ENCODE measurements at regions of chr6 and their contacts with region 1.

Region 1: DNA sequence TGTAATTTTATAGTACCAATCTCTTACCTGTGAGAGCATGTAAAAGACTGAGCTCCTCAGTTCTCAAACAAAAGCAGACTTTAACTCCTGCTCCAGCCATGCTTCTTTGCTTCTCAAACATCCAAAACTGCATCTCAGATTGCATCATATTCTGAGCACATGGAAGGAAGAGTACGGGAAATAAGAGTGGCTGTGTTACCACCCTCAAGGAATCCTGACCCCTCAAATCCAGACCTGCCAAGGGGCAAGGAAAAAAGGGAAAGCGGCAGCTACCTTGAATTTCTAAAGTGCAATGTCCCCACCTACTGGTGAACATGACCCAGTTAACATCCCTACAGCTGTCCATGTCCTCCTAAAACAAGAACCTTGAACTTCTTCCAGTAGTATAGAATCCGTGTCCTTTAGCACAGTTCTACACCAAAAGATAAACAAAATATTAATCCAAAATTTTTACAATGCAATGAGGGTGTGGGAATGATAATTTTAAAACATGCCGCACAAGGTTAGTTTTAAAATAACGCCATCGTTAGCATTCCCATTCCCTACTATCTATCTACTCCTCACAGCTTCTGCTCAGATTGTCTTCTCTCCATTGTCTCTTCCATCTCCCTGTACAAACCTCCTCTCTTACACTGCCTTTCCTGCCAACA is 34.1 kb upstream of the HLA-DQB1 start:
- DNase-seq: peak in 2 of 10 donors; percentile 4 to 21
- H3K4me3 ChIP-seq: no peak overlapping the region
- H3K27ac ChIP-seq: no peak overlapping the region
- H3K27me3 ChIP-seq: peaks cover 0 to 62% (median 6%) of the 10 kb centered on the region in 45 donors
- CTCF ChIP-seq: peak; percentile 33 to 88 (median 72)

Region 2: DNA sequence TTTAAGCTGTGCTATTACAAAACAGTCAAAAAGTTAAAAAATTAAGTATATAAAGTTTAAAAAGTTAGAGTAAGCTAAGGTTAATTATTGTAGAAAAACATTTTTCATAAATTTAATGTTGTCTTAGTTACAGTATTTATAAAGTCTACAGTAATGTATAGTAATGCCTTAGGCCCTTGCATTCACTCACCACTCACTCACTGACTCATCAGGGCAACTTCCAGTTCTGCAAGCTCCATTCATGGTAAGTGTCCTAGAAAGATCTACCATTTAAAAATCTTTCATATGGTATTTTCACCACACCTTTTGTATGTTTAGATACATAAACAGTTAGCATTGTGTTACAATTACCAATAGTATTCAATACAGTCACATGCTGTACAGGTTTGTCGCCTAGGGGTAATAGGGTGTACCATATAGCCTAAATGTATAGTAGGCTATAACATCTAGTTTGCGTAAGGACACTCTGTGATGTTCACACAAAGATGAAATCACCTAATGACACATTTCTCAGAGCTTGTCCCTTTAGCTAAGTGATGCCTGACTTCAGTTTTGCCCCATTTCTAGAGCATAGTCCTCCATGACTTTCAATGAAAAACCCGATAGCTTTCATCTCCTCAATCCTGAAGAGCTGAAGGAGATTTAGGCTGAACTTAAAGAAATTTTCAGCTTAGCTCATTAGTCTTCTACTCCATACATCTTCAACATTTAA is 275.8 kb before region 1 on chr6:
- intact Hi-C with region 1: loop called (anchors 5 to 10 kb)
- DNase-seq: no peak
- H3K4me3 ChIP-seq: no peak overlapping the region
- H3K27ac ChIP-seq: no peak overlapping the region
- H3K27me3 ChIP-seq: peaks cover 0 to 22% (median 8%) of the 10 kb centered on the region in 45 donors
- CTCF ChIP-seq: no peak

Region 3: DNA sequence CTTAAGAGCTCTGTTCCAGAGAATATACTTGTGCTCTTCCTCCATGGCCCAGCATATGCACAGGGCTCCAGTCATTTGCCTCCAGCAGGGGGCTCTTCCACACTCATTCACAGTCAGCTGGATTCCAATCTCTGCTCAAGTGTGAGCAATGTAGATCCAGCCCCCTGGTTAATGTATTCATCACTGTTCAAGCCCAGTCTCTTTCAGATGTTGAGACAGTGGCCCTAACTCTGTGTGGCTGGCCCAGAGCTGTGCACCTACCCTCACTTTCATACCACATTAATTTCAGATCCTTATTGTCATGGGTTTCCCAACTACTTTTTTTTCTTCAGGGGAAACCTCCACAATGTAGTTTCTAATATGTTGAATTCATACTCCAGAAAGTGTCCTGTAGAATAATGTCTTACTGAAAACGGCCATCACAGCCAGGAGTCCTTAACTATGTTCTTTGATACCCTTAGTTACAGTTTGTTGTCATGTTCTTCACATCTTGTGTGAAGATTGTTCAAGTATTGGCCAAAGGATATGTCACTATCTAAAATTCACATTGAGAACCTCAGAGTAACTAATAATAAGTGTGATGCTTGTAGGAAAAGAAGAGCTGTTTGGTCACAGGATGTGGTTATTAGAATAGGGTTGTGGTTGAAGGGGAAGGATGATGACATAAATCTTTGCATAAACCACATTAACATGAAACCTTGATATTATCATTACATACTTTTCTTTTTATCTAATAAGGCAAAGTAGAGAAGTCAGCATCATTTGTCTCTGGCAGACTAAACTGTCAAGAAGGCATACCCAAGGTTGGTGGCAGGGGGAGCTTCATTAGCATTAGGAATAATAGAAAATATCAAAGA is 77.7 kb before region 1 on chr6:
- intact Hi-C with region 1: no loop called
- DNase-seq: no peak
- H3K4me3 ChIP-seq: no peak overlapping the region
- H3K27ac ChIP-seq: no peak overlapping the region
- H3K27me3 ChIP-seq: no peaks in the 10 kb centered on the region
- CTCF ChIP-seq: peak in 27 of 56 donors; percentile 9 to 59 (median 39)

Measured in dorsolateral prefrontal cortex (tissue), 120 donors.